Activated T-helper 1 cell treated with anti-CD3 and anti-CD28 coated beads, Interleukin-12 subunit alpha, Interleukin-12 subunit beta, Interleukin-2, Interleukin-4 antibody, amounts not matched to agents 30 ng/mL and 10 ng/mL and 1 ng/mL, durations not matched to agents 14 hours and 24 hours and 36 hours (primary cell): ENCODE measurements at regions of chr18 and their contacts with region 1.

Region 1: DNA sequence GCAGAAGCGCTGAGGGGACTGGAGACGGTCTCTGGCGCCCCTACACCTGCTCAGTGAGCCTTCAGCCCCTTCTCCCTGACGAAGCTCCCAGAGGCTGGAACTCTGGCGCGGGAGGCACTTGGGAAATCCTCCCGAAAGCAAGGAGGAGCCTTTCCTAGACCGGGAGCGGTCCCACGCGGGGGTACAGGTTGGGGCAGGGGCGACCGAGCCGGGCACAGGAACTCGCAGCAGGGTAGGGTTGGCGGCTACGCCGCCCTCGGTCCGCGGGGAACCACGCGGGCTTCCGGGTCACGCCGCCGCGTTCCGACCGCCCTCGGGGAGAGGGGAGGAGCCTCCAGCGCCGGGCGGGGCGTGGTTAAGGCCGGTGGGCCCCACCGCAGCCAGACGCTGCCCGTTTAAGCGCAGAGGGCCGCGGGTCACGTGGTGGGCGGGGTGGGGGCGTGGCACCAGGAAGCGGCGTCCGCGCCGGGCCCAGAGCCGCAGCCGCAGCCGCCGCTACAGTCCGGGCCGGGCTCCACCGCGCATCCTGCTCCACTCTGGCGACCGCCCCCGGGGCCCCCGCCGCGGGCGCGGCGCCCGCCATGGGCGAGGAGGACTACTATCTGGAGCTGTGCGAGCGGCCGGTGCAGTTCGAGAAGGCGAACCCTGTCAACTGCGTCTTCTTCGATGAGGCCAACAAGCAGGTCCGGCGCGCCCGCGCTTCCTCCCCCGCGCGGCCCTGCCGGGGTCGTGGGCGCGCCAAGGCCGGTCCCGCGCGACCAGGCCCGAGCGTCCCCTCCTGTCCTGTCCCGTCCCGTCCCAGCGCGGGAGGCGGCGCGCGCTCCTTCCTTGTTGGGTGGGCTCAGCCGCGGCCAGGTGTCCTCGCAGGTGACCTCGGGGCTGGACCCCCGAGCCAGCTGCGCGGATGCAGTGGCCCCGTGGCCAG is at the start of gene RMC1:
- DNase-seq: peak; percentile 96
- H3K4me3 Mint-ChIP-seq: peak within 1 kb of the TSS; percentile 97
- H3K27ac Mint-ChIP-seq: peak within 1 kb of the TSS; percentile 91
- H3K4me1 Mint-ChIP-seq: peaks cover 66% of the 10 kb centered on the region
- H3K27me3 Mint-ChIP-seq: no peaks in the 10 kb centered on the region
- total RNA-seq, gene RMC1: 56.3 and 56.7 TPM in 2 replicates

Region 2: DNA sequence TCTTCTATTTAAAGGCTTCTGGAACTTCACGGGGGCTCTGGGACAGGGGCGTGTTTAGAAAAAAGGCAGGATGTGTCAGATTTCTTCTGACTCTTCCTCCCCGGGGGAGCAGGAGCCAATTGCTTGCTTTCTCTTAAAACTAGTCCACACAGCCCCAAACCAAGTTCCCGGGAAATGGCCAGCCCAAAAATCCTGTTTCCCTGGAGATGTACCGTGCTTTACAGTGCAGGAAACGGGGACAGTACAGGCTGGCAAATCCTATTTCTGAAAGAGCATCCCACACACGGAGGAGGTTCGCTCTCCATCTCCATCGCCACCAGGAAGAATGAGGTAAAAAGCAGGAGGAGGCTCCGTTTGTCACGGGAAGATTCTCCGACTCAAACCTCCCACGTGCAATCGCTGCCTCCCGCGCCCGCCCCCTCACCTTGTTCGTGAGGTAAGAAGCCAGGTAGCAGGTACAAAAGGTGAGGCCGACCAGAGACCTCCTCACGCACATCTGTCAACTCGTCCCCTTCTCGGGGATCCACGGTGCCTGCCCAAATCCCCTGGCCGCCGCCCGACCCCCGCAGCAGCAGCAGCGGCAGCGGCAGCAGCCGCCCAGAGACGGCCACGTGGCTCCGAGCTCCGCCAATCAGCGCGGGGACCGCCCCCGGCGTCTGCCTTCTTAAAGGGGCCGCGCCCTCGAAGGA is 65.8 kb before region 1 on chr18:
- intact Hi-C with region 1: loop called (anchors 1 kb)
- DNase-seq: peak; percentile 74
- H3K4me3 Mint-ChIP-seq: peak overlapping the region; percentile 86
- H3K27ac Mint-ChIP-seq: peak overlapping the region; percentile 44
- H3K4me1 Mint-ChIP-seq: peaks cover 22% of the 10 kb centered on the region
- H3K27me3 Mint-ChIP-seq: peaks cover 2% of the 10 kb centered on the region

Region 3: GRCh38 chr18:23458830-23459529 is 44.3 kb before region 1 on chr18:
- intact Hi-C with region 1: no loop called
- DNase-seq: no peak
- H3K4me3 Mint-ChIP-seq: peak overlapping the region; percentile 12
- H3K27ac Mint-ChIP-seq: peak overlapping the region; percentile 8
- H3K4me1 Mint-ChIP-seq: peaks cover 57% of the 10 kb centered on the region
- H3K27me3 Mint-ChIP-seq: no peaks in the 10 kb centered on the region

Region 4: GRCh38 chr18:23515911-23516546 is 12.7 kb after region 1 on chr18:
- intact Hi-C with region 1: loop called (anchors 1 kb)
- DNase-seq: peak; percentile 61
- H3K4me3 Mint-ChIP-seq: no peak overlapping the region
- H3K27ac Mint-ChIP-seq: peak overlapping the region; percentile 3
- H3K4me1 Mint-ChIP-seq: peaks cover 35% of the 10 kb centered on the region
- H3K27me3 Mint-ChIP-seq: no peaks in the 10 kb centered on the region

Region 5: DNA sequence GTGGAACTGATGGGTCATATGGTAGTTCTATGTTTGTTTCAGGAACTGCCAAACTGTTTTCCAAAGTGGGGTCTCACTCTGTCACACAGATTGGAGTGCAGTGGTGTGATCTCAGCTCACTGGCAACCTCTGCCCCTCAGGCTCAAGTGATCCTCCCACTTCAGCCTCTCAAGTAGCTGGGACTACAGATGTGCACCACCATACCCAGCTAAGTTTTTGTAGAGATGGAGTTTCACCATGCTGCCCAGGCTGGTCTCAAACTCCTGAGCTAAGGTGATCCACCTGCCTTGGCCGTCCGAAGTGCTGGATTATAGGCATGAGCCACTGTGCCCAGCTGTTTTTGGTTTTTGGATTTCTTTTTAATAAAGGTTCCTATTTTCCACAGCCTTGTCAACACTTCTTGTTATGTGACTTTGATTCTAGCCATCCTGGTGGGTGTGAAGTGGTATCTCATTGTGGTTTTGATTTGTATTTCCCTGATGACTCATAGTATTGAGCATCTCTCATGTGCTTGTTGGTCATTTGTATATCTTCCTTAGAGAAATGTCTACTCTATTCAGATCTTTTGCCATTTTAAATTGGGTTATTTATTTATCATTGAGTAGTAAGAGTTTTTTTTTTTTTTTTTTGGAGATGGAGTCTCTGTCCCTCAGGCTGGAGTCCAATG is 60.2 kb after region 1 on chr18:
- intact Hi-C with region 1: loop called (anchors 2 kb)
- DNase-seq: no peak
- H3K4me3 Mint-ChIP-seq: no peak overlapping the region
- H3K27ac Mint-ChIP-seq: peak overlapping the region; percentile 2
- H3K4me1 Mint-ChIP-seq: peaks cover 7% of the 10 kb centered on the region
- H3K27me3 Mint-ChIP-seq: no peaks in the 10 kb centered on the region

Region 6: GRCh38 chr18:23812546-23813440 is 309.5 kb after region 1 on chr18:
- intact Hi-C with region 1: loop called (anchors 1 kb)
- DNase-seq: no peak
- H3K4me3 Mint-ChIP-seq: no peak overlapping the region
- H3K27ac Mint-ChIP-seq: no peak overlapping the region
- H3K4me1 Mint-ChIP-seq: peaks cover 23% of the 10 kb centered on the region
- H3K27me3 Mint-ChIP-seq: peaks cover 23% of the 10 kb centered on the region

Region 7: GRCh38 chr18:23918401-23919032 is 415.2 kb after region 1 on chr18:
- intact Hi-C with region 1: loop called (anchors 2 kb)
- DNase-seq: peak; percentile 54
- H3K4me3 Mint-ChIP-seq: no peak overlapping the region
- H3K27ac Mint-ChIP-seq: no peak overlapping the region
- H3K4me1 Mint-ChIP-seq: peaks cover 29% of the 10 kb centered on the region
- H3K27me3 Mint-ChIP-seq: peaks cover 26% of the 10 kb centered on the region